Activated CD4-positive, alpha-beta T cell treated with anti-CD3 and anti-CD28 coated beads, Interleukin-2, amount 10 ng/mL, durations not matched to agents 7 days and 5 days (primary cell): ENCODE measurements at regions of chr1 and their contacts with region 1.

Region 1: DNA sequence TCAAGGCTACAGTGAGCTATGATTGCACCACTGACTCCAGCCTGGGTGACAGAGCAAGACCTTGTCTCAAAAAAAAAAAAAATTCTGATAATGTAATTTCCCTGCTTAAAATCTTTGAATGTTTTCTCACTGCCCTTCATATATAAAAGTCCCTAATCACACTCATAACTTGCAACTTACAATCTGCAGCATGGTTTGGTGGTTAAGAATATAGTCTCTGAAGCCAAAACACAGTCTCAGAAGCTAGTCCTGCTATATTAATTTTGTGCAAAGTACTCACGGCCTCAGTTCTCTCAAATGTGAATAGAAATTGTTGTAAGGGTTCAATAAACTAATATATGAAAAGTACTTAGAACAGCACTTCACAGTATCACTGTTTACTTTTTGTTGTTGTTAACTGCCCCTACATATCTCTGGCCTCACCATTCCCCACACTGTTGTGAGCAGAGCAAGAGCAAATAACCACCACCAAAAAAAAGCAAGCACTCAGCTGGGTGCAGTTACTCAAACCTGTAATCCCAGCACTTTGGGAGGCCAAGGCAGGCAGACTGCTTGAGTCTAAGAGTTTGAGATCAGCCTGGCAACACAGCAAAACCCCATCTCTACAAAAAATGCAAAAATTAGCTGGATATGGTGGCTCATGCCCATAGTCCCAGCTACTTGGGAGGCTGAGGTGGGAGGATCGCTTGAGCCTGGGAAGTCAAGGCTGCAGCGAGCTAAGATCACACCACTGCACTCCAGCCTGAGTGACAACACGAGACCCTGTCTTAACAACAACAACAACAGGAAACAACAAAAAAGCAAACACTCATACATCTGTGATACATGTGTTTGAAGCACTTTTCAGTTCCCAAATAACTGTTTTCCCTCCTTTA is 22.4 kb downstream of the ASH1L start:
- DNase-seq: no peak
- H3K4me3 Mint-ChIP-seq: no peak overlapping the region
- H3K27ac Mint-ChIP-seq: peak overlapping the region; percentile 88
- H3K4me1 Mint-ChIP-seq: peaks cover 53% of the 10 kb centered on the region
- H3K27me3 Mint-ChIP-seq: no peaks in the 10 kb centered on the region

Region 2: GRCh38 chr1:155455588-155456195 is 84.5 kb before region 1 on chr1:
- CTCF ChIA-PET with region 1: no interaction called
- POLR2A ChIA-PET with region 1: no interaction called
- DNase-seq: no peak
- H3K4me3 Mint-ChIP-seq: no peak overlapping the region
- H3K27ac Mint-ChIP-seq: no peak overlapping the region
- H3K4me1 Mint-ChIP-seq: peaks cover 3% of the 10 kb centered on the region
- H3K27me3 Mint-ChIP-seq: no peaks in the 10 kb centered on the region

Region 3: DNA sequence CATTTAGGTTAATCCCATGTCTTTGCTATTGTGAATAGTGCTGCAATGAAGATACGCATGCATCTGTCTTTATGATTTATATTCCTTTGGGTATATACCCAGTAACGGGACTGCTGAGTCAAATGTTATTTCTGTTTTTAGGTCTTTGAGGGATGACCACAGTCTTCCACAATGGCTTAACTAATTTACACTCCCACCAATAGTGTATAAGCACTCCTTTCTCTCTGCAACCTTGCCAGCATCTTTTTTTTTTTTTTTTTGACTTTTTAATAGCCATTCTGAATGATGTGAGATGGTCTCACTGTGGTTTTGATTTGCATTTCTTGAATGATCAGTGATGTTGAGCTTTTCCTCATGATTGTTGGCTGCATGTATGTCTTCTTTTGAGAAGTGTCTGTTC is 11.1 kb before region 1 on chr1:
- CTCF ChIA-PET with region 1: interaction called, 5 read pairs
- POLR2A ChIA-PET with region 1: interaction called, 12 read pairs
- DNase-seq: no peak
- H3K4me3 Mint-ChIP-seq: no peak overlapping the region
- H3K27ac Mint-ChIP-seq: no peak overlapping the region
- H3K4me1 Mint-ChIP-seq: peaks cover 18% of the 10 kb centered on the region
- H3K27me3 Mint-ChIP-seq: no peaks in the 10 kb centered on the region